Left ventricle myocardium superior (tissue), 1 donor: ENCODE measurements at regions of chr1 and their contacts with region 1.

Region 1: DNA sequence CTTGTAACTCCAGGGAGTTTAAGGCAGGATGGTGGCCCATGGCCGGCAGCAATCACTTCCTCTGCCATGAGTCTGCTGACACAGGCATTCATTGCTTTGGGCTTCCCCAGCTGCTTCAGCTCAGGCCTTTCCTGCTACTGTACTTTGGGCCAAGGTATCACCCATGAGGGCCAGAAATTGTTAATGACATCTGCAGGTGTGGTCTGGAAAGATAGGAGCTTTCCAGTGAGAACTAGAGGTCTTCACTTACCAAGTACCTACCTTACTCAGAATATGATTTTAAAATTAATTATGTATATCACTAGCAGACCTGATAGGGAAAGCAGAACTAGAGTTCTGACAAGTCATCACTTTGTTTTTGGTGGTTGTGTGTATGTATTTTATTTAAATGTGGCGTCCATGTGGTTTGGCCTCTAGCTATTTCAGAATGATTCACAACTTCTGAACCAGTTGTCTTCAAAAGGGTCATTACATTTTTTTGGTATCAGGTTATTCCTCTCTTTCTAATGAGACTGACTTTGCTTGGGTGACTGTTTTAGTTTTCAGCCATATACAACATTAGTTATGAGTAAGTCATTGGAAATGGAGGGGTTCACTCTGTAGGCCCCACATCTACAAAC is 2.7 kb downstream of the RGL1 start:
- DNase-seq: peak; percentile 38
- ATAC-seq: peak; percentile 17

Region 2: DNA sequence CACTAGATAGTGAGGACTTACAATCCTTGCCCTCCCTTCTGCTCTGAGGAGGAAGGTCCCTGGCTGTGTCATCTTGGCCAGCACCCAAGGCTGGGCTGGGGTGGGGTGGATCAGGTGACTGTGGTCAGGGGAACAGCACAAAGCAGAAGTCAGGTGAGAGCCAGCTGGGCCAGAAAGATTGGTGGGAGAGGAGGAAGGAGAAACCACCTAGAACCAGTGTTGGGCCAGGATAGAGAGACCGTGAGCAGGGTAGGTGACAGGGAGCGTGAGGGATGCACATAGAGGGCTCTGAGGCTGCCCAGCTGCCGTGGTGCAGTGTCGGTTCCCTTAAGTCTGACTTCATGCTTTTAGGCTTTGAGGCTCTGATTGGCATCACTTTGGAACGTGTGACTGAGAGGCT is 240.1 kb before region 1 on chr1:
- intact Hi-C with region 1: no loop called
- DNase-seq: peak; percentile 64
- ATAC-seq: peak; percentile 76

Region 3: GRCh38 chr1:183739741-183740271 is 67.9 kb before region 1 on chr1:
- intact Hi-C with region 1: loop called (anchors 2 kb)
- DNase-seq: no peak
- ATAC-seq: peak; percentile 35

Region 4: GRCh38 chr1:183995322-183996039 is 187.8 kb after region 1 on chr1:
- intact Hi-C with region 1: no loop called
- DNase-seq: peak; percentile 66
- ATAC-seq: peak; percentile 88